HepG2 (cell line): ENCODE measurements at regions of chr1 and their contacts with region 1.

Region 1: GRCh38 chr1:37989361-37989930 is 376 bp downstream of the SF3A3 start:
- DNase-seq: no peak
- ATAC-seq: peak; percentile 51
- H3K4me3 ChIP-seq: peak overlapping the region; percentile 84 to 96 (median 95)
- H3K27ac ChIP-seq: peak overlapping the region; percentile 63
- H3K4me1 ChIP-seq: peaks cover 19% of the 10 kb centered on the region
- H3K27me3 ChIP-seq: no peaks in the 10 kb centered on the region; a peak in 1 of 5 replicates
- CTCF ChIP-seq: no peak
- EP300 ChIP-seq: no peak
- POLR2A ChIP-seq: no peak
- RAD21 ChIP-seq: no peak

Region 2: GRCh38 chr1:37100310-37100709 is 889.1 kb before region 1 on chr1:
- CTCF ChIA-PET with region 1: no interaction called
- POLR2A ChIA-PET with region 1: no interaction called
- in situ Hi-C with region 1: no loop called
- intact Hi-C with region 1: no loop called
- DNase-seq: no peak
- ATAC-seq: no peak
- H3K4me3 ChIP-seq: no peak overlapping the region
- H3K27ac ChIP-seq: no peak overlapping the region
- H3K4me1 ChIP-seq: no peaks in the 10 kb centered on the region
- H3K27me3 ChIP-seq: peaks cover 0 to 2% of the 10 kb centered on the region in 2 experiments; a peak in 2 of 5 replicates
- CTCF ChIP-seq: no peak
- EP300 ChIP-seq: no peak
- POLR2A ChIP-seq: no peak
- RAD21 ChIP-seq: no peak

Region 3: DNA sequence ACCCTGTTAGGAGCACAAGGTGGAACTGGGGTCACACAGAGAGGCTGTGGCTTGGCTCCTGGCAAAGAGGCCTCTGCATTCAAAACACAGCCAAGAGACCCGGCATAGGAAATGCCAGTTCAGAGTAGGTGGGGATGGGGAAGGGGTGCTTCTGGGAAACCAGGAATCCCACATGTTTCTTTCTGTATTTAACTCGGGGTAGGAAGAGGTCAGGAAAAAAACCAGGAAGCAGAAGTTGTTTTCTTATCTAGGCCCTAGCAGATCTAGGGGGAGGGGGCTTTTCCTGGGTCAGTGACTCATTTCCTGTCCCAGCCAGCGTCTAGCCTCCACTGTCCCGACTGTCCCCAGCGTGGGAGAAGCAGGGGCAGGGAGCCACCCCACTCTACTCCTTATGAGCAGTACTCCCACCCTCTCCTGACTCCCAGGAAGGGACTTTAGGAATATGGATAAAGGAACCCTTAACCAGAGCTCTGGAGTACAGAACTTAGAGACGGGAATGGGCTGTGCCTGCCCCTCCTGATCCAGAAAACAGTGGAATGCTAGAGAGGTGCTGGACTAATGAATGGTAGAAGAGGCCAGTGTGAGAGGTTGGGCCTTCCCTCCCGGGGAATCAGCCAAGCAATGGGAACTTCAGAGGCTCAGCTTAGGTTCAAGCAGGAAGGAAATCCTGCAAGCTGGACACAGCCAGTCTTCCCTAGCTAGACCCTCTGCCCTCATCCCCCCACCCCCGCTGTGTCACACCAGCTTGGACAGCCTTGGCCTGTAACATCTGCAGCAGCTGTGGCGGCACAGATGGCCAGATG is 10.2 kb after region 1 on chr1:
- CTCF ChIA-PET with region 1: interaction called, 3 read pairs
- POLR2A ChIA-PET with region 1: interaction called, 27 read pairs
- in situ Hi-C with region 1: no loop called
- intact Hi-C with region 1: no loop called
- DNase-seq: peak; percentile 75
- ATAC-seq: peak; percentile 61
- H3K4me3 ChIP-seq: peak overlapping the region; percentile 9 to 58 (median 27); a peak in 5 of 6 replicates
- H3K27ac ChIP-seq: peak overlapping the region; percentile 72
- H3K4me1 ChIP-seq: peaks cover 55% of the 10 kb centered on the region
- H3K27me3 ChIP-seq: no peaks in the 10 kb centered on the region; a peak in 1 of 5 replicates
- CTCF ChIP-seq: no peak
- EP300 ChIP-seq: peak in 1 of 2 experiments; percentile 51; a peak in 1 of 4 replicates
- POLR2A ChIP-seq: peak in 1 of 2 experiments; percentile 38; a peak in 1 of 4 replicates
- RAD21 ChIP-seq: no peak

Region 4: DNA sequence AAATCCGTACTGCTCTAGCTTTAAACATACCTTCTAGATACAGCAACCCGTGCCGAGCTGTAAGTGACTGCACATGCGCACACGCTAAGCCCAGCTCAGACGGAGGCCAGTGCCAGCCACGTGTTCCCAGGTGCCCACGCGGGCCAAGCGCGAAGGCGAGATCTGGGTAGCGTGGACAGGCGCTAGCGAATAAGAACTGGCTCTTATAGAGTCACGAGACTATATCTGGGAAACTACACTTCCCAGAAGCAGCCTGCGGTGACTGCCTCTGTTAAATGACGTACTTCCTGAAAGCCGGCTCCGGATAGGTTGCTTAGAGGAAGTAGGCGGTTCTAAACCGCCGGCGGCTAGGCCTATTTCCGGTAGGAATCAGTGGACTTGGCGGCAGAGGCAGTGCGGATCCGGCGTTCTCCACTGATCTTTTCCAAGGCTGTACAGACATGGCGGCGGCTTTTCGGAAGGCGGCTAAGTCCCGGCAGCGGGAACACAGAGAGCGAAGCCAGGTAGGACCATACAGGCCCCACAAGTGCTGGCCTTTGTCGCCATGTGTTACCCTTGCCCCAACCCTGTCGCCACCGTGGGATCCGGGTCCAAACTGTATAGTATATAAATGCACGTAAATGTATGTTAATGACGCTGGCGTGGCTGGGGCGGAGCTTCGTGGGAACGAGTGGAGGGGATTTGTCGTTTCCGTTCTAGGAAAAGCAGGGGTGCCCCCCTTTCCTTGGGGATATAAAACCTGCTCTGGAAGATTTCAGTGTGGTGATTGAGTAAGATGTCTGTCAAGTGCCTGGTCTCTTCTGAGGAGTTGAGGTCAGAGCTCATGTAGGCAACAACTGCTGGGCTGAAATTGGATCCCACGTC is 23.1 kb after region 1 on chr1 and contains the start of gene UTP11:
- CTCF ChIA-PET with region 1: interaction called, 45 read pairs
- POLR2A ChIA-PET with region 1: interaction called, 16 read pairs
- in situ Hi-C with region 1: no loop called
- intact Hi-C with region 1: no loop called
- DNase-seq: peak; percentile 98
- ATAC-seq: peak; percentile 94
- H3K4me3 ChIP-seq: peak within 1 kb of the TSS; percentile 74 to 95 (median 85)
- H3K27ac ChIP-seq: peak within 1 kb of the TSS; percentile 88
- H3K4me1 ChIP-seq: peaks cover 54% of the 10 kb centered on the region
- H3K27me3 ChIP-seq: no peaks in the 10 kb centered on the region; a peak in 1 of 5 replicates
- CTCF ChIP-seq: no peak
- EP300 ChIP-seq: no peak
- POLR2A ChIP-seq: peak; percentile 80 to 95
- RAD21 ChIP-seq: no peak; the same call in 1 of the 2 replicates
- total RNA-seq, gene UTP11: 44.8 and 71.4 TPM in 2 replicates

Region 5: DNA sequence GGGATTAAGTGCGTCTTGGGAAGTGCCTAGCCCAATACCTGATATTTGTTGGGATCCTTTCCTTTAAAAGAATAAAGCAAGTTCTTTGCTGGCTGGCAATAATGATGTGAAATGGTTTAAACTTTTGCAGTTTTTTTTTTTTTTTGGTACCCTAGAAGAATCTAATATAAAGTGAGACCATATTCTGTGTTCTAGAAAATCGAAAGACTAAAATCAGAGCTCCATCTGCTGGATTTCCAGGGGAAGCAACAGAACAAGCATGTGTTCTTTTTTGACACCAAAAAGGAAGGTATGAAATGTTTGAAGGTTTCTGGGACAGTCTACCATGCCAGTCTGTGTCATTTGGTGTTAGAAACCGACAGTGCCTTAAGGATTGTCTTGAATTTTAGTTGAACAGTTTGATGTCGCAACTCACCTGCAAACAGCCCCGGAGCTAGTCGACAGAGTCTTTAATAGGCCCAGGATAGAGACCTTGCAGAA is 29.5 kb after region 1 on chr1:
- CTCF ChIA-PET with region 1: interaction called, 45 read pairs
- POLR2A ChIA-PET with region 1: interaction called, 3 read pairs
- in situ Hi-C with region 1: no loop called
- intact Hi-C with region 1: loop called (anchors 1 kb)
- DNase-seq: peak; percentile 45
- ATAC-seq: peak; percentile 54; the same call in 2 of the 3 replicates
- H3K4me3 ChIP-seq: no peak overlapping the region
- H3K27ac ChIP-seq: no peak overlapping the region
- H3K4me1 ChIP-seq: peaks cover 20% of the 10 kb centered on the region
- H3K27me3 ChIP-seq: no peaks in the 10 kb centered on the region
- CTCF ChIP-seq: peak; percentile 55
- EP300 ChIP-seq: no peak
- POLR2A ChIP-seq: no peak
- RAD21 ChIP-seq: no peak